Activated T-helper 1 cell treated with anti-CD3 and anti-CD28 coated beads, Interleukin-12 subunit alpha, Interleukin-12 subunit beta, Interleukin-2, Interleukin-4 antibody, amounts not matched to agents 30 ng/mL and 10 ng/mL and 1 ng/mL, durations not matched to agents 14 hours and 24 hours and 36 hours (primary cell): ENCODE measurements at regions of chr16 and their contacts with region 1.

Region 1: GRCh38 chr16:89507834-89508590 is at the start of gene SPG7:
- DNase-seq: peak; percentile 91
- H3K4me3 Mint-ChIP-seq: peak within 1 kb of the TSS; percentile 97
- H3K27ac Mint-ChIP-seq: peak within 1 kb of the TSS; percentile 96
- H3K4me1 Mint-ChIP-seq: peaks cover 22% of the 10 kb centered on the region
- H3K27me3 Mint-ChIP-seq: no peaks in the 10 kb centered on the region
- total RNA-seq, gene SPG7: 106 and 112 TPM in 2 replicates

Region 2: DNA sequence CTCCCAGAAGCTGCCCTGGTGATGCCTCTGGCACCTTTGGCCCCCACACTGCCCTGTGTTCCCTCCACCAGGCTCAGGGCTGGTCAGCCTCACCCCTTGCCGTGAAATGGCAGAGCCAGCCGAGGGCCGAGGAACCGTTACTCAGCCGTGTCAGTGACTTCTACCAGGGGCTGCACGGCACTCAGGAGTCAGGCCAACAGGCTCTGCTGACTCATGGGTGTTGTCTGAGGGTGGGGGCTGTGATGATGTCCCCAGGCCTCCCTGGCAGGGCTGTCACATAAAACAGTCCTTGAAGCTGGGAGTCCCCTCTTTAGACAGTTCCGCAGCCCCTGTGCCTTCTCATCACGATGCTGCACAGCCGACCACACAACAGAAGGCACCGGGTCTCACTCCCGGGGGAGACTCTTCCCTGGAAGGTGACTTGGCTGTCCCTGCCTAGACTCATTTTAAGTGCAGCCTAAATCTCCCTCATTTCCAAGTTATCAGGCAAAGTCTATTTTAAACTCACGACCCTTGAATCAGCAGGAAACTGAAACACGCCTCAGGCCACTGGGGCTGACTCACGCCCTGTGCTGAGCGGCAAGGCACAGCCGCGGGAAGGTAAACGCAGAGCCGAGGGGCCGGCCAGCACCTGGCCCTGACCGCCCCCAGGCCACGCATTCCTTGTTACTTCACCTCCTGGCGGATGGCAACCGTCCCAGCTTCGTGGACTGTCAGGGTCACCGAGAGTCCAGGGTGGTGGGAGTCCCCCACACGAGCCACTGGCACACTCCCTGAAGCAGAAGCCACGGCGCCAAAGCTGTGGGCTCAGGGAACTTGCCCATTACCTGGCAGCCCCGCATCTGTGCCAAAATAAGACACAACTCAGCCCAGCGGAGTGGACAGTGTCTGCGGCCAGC is 187.9 kb before region 1 on chr16:
- intact Hi-C with region 1: loop called (anchors 1 kb)
- DNase-seq: no peak
- H3K4me3 Mint-ChIP-seq: peak overlapping the region; percentile 65
- H3K27ac Mint-ChIP-seq: peak overlapping the region; percentile 81
- H3K4me1 Mint-ChIP-seq: peaks cover 88% of the 10 kb centered on the region
- H3K27me3 Mint-ChIP-seq: no peaks in the 10 kb centered on the region

Region 3: DNA sequence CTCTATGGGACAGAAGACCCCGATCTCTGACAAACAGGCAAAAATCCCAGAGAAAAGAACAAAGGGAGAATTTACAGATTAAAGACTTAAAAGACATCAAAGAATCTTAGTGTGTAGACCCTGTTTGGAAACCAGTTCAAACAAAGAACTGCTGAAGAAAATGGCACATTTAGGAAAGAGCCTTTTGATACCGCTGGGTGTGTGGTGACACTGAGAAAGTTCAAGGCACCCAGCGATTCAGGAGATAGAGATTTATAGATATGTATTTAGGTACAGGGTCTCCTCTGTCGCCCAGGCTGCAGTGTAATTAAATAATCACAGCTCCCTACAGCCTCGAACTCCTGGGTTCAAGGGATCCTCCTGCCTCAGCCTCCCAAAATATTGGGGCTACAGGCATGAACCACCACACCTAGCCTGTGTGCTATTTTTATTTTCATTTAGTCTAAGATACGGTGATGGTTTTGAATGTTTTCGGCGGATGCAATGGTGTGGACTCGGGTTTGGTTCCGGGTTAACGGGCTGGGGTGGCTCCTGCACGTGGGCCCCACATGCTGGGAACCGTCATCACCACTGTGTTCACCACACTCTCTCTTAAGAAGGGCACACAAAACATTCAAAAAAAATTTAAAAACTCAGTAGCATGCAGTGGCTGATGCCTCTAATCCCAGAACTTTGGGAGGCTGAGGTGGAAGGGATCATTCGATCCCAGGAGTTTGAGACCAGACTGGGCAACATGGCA is 176.5 kb before region 1 on chr16:
- intact Hi-C with region 1: loop called (anchors 1 kb)
- DNase-seq: no peak
- H3K4me3 Mint-ChIP-seq: peak overlapping the region; percentile 31
- H3K27ac Mint-ChIP-seq: peak overlapping the region; percentile 2
- H3K4me1 Mint-ChIP-seq: peaks cover 71% of the 10 kb centered on the region
- H3K27me3 Mint-ChIP-seq: no peaks in the 10 kb centered on the region

Region 4: DNA sequence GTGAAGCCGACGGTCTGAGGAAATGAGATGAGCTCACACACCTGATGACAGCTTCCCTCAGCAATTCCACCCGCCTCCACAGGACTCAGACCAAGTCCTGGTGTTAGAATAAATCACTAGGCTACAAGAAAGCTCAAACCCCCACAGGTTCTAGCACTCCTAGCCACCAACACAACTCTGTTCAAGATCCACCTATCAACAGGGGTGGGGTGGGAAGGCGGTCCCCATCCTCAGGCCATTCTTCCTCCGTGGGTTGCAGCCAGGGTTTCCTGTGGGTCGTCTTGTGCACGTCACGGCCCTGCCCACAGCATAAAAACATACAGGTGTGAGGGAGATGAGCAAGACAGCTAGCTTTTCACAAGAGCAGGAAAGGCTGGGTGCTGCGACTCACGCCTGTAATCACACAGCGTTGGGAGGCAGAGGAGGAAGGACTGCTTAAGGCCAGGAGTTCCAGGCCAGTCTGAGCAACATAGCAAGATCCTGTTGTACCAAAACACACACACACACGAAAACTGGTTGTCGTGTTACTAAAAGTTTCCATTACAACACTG is 98.8 kb before region 1 on chr16:
- intact Hi-C with region 1: loop called (anchors 1 kb)
- DNase-seq: peak; percentile 60
- H3K4me3 Mint-ChIP-seq: peak overlapping the region; percentile 58
- H3K27ac Mint-ChIP-seq: peak overlapping the region; percentile 94
- H3K4me1 Mint-ChIP-seq: peaks cover 72% of the 10 kb centered on the region
- H3K27me3 Mint-ChIP-seq: no peaks in the 10 kb centered on the region

Region 5: GRCh38 chr16:89560378-89561141 is 52.5 kb after region 1 on chr16 and contains the start of gene RPL13:
- intact Hi-C with region 1: loop called (anchors 1 kb)
- DNase-seq: peak; percentile 91
- H3K4me3 Mint-ChIP-seq: peak within 1 kb of the TSS; percentile 98
- H3K27ac Mint-ChIP-seq: peak within 1 kb of the TSS; percentile 99
- H3K4me1 Mint-ChIP-seq: peaks cover 48% of the 10 kb centered on the region
- H3K27me3 Mint-ChIP-seq: no peaks in the 10 kb centered on the region
- total RNA-seq, gene RPL13: 2,076 and 2,133 TPM in 2 replicates

Region 6: GRCh38 chr16:89873972-89874689 is 366.1 kb after region 1 on chr16:
- intact Hi-C with region 1: loop called (anchors 10 kb)
- DNase-seq: peak; percentile 88
- H3K4me3 Mint-ChIP-seq: peak overlapping the region; percentile 90
- H3K27ac Mint-ChIP-seq: peak overlapping the region; percentile 99
- H3K4me1 Mint-ChIP-seq: peaks cover 11% of the 10 kb centered on the region
- H3K27me3 Mint-ChIP-seq: peaks cover 2% of the 10 kb centered on the region